A673 (cell line): ENCODE measurements at regions of chr9 and their contacts with region 1.

Region 1: DNA sequence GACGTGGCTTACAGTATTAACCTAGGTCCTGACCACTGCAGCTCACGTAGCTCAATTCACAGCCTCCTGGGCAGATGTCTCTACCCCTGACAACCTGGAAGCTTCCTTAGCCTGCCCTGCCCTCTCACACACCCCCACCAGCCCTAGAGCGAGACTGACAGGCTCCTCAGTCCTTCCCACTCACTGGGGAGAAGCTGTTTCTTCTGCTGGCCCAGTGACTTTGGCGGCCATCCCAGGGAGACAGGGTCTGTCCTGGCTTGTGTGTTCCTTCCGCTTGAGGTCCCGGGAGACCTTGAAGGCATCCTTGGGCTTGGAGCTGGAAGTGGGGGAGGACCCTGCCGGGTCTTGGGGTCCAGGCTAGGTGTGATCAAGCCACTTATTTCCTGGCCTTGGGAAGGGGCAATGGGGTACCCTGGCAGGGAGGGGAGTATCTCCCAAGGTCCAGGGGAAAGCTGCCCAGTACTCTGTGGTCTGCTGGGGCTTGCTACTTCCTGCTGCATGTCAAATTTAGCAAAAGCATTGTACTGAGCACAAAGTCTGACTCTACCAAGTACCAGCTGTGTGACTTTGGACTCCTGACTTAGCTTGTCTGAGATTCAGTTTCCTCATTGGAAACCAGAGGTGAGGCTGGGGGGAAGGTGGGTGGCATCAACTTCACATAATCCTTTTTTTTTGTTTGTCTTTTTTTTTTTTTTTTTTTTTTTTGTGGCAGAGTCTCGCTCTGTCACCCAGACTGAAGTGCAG is 1.9 kb downstream of the MIGA2 start:
- DNase-seq: no peak
- H3K4me3 ChIP-seq: peak overlapping the region; percentile 97
- H3K27ac ChIP-seq: no peak overlapping the region
- H3K4me1 ChIP-seq: peaks cover 12% of the 10 kb centered on the region
- H3K27me3 ChIP-seq: no peaks in the 10 kb centered on the region
- CTCF ChIP-seq: no peak

Region 2: DNA sequence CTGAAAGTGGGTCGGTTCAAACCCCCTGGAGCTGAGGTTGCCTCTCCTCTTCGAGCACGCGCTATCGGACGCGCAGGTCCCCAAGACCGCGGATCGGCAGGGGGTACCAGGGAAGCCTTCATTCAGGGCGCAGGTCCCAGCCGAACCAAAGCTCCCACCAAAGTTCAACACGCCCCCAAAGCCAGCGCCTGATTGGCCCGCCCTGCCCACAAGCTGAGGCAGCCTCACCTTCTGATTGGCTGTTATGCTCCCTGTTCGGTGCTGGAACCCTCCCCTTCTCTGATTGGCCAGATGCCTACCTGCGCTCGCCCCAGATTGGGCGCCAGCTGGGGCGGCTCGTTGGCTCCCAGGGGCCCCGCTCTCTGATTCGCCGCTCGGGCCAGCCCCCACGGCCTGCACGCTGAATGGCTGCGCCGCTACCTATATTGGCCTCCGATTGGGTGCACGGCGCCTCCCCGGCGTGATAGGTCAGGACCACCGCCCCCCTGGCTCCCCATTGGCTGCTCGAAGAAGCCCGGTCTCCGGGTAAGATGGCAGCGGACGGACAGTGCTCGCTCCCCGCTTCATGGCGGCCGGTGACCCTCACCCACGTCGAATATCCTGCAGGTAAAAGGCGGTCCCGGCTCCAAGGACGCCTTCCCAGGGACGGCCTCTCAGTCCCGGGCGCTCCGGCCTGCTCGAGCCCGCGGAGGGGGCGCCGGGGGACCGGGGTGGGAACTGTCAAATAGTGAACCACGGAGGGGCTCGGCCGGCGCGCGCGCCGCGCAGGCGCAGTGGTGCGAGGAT is 42.5 kb after region 1 on chr9 and contains the start of gene DOLPP1:
- CTCF ChIA-PET with region 1: interaction called, 10 read pairs
- POLR2A ChIA-PET with region 1: no interaction called
- intact Hi-C with region 1: no loop called
- DNase-seq: peak; percentile 100
- H3K4me3 ChIP-seq: peak within 1 kb of the TSS; percentile 82
- H3K27ac ChIP-seq: peak within 1 kb of the TSS; percentile 83
- H3K4me1 ChIP-seq: peaks cover 15% of the 10 kb centered on the region
- H3K27me3 ChIP-seq: no peaks in the 10 kb centered on the region
- CTCF ChIP-seq: no peak
- total RNA-seq, gene DOLPP1: 30.2 and 30.4 TPM in 2 replicates

Region 3: DNA sequence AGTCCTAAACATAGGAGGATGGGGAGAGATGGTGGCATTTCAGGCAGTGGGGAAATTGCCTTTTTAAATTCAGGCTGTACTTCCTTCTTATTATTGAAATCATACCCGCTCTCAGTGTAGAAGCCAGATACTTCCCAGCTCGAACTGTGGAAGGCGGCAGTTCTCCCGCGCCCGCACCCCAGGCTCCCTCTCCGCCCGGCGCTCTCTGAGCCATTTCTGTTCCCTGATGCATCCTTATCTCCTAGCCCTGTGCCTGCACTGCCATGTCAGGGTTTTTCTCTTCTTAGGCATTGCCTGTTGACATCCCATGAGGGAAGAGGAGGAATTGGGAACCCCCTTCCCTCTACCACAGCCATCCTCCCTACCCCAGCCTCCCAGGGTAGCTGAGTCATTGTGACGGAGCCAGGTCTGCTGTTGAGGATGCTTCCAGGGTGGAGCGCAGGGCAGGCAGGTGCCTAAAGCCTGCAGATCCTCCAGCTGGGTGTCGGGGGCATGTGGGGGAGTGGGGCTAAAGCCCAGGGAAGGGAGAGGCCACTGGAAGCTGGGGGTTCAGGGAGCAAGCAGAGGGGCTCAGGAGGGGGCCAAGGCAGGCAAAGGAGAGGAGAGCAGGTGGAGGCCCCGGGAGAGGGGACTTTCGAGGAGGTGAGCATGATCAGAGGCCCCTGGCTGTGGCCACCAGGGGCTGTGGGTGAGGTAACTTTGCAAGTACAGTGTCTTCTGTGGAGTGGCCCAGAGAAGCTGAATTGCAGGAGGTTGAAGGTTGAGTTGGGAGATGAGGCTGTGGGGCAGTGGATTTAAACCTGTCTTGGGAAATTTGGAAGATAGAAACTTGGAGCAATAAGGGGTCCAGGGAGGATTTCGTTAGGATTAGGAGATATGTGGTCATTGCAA is 1986.9 kb after region 1 on chr9:
- CTCF ChIA-PET with region 1: no interaction called
- POLR2A ChIA-PET with region 1: no interaction called
- intact Hi-C with region 1: no loop called
- DNase-seq: no peak
- H3K4me3 ChIP-seq: no peak overlapping the region
- H3K27ac ChIP-seq: no peak overlapping the region
- H3K4me1 ChIP-seq: no peaks in the 10 kb centered on the region
- H3K27me3 ChIP-seq: peaks cover 16% of the 10 kb centered on the region
- CTCF ChIP-seq: no peak